ENCODE measurements at regions of chr14 and their contacts with region 1.

Region 1: DNA sequence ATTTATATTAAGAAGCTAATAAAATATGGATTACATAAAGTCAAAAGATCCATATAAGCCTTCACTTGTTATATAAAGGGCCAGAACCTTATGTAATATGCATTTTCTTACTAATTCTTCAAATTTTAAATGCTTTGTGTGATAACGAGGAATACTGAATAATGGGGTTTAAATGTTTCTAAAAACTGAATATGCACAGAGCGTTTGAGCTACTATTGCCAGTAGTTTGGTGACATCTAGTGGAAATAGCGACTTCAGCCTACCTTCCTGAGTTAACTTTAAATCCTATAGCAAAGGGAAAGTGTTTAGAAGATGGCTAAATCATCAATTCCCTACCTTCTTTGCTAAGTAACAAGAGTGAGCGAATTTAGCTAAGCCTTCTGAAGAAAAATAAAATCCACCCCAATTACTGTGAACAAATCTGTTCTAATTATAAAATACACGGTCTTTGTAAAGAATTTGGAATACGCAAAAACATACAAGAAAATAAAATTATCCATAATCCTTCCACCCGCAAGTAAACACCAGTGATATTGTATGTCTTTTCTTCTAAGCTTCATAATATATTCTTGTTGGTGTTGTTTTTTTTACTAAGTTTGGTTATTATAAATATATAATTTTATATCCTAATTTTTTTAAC is 115.5 kb upstream of the G2E3 start:
- DNase-seq: peak; percentile 16
- ATAC-seq: 0 out of 2 replicates have a peak, but pooled peaks have one; percentile 53
- H3K4me3 ChIP-seq: no peak overlapping the region
- H3K27ac ChIP-seq: no peak overlapping the region
- H3K4me1 ChIP-seq: no peaks in the 10 kb centered on the region
- H3K27me3 ChIP-seq: peaks cover 34% of the 10 kb centered on the region
- CTCF ChIP-seq: peak; percentile 25 to 66 (median 48); a peak in 5 of 6 replicates
- POLR2A ChIP-seq: no peak
- RAD21 ChIP-seq: peak; percentile 63

Region 2: GRCh38 chr14:30375296-30375892 is 68.1 kb before region 1 on chr14:
- CTCF ChIA-PET with region 1: interaction called, 17 read pairs
- POLR2A ChIA-PET with region 1: no interaction called
- RAD21 ChIA-PET with region 1: no interaction called
- intact Hi-C with region 1: loop called (anchors 1 kb)
- DNase-seq: peak; percentile 39
- ATAC-seq: peak; percentile 97
- H3K4me3 ChIP-seq: no peak overlapping the region
- H3K27ac ChIP-seq: no peak overlapping the region
- H3K4me1 ChIP-seq: no peaks in the 10 kb centered on the region
- H3K27me3 ChIP-seq: peaks cover 6% of the 10 kb centered on the region; the same call in 1 of the 2 replicates
- CTCF ChIP-seq: peak; percentile 26 to 89 (median 84); a peak in 5 of 6 replicates
- POLR2A ChIP-seq: no peak
- RAD21 ChIP-seq: peak; percentile 57